ENCODE measurements at regions of chr10 and their contacts with region 1.

Region 1: DNA sequence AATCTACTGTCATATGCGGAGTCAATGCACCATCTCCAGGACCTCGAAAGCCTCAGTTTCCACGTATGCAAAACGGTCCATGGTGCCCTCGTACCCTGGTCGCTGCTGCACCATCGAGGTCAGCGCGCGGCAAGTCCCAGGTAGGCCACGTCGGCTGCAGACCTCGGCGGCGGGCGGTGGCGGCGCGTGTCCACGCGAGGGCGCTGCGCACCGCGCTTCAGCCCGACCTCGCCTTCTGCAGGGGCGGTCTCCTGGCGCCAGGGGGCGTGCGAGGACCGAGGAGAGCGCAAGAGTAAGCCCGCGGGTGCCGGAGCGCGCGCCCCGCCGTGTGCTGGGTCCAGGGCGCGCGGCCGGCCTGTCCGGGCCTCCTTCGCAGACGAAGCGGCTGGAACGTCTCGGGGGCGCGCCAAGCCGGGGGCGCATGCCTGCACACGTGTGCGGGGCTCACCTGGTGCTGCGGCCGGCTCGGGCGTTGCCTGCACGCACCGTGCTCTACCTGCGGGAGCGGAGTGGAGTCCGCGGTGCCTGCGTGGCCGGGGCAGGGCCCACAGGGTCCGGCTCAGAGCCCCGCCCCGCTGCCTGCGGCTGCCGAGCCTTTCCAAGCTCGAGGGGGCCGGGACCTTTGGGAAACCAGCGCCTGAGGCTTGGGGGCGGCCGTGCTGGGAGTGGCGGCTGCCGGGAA is 54.0 kb downstream of the GLRX3 start:
- DNase-seq: peak; percentile 94
- ATAC-seq: peak; percentile 96

Region 2: GRCh38 chr10:131786756-131787605 is 1596.8 kb after region 1 on chr10:
- intact Hi-C with region 1: loop called (anchors 5 kb)
- DNase-seq: no peak
- ATAC-seq: no peak

Region 3: GRCh38 chr10:131874991-131875451 is 1684.8 kb after region 1 on chr10:
- intact Hi-C with region 1: loop called (anchors 5 kb)
- DNase-seq: peak; percentile 80
- ATAC-seq: peak; percentile 86